Heart right ventricle (tissue), 16 donors: ENCODE measurements at regions of chr5 and their contacts with region 1.

Region 1: DNA sequence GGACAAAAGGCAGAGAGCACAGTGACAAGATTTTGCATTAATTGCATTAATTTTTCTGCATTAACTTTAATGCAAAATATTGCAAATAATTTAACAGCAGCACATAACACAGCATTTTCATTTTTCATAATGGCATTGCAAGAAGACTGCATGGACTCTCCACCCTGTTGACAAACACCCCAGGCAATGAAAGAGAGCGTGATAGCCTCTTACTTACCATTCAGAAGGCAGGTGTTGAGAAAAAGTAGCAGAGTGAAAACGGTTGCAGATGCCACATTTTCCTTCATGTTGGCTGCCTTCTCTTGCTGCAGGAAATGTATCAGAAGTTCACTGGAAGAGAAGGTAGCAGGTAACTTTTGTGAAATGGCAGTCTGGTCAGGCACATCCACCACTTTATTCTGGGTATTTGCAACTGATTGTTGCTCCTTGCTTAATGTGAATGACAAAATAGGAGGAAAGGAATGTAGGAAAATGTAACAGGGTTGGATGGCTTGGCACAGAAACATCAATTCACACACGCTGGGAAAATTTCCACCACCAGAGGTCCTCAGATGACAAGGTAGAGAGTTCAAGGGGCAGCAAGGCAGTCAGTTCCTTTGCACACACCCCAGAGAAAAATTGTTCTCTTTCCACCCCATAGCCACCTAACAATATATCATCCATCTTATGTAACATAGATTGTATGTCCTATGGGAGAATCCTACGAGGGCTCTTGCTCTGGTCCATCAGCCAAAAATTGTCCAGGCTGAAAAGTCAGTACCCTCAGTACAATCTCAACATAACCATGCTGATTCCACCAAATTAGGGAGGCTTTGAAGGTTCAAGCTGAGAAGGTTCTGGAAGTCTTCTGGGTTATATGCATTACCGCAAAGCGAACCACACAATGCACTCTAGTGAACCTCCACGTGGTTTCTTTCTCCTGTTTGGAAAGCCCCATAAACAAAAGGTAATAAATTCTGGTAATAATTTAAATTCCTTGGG is 41.9 kb upstream of the AGXT2 start:
- DNase-seq: peak in 1 of 2 donors; percentile 23
- ATAC-seq: no peak
- H3K4me3 ChIP-seq: no peak overlapping the region
- H3K27ac ChIP-seq: no peak overlapping the region
- H3K4me1 ChIP-seq: no peaks in the 10 kb centered on the region
- H3K27me3 ChIP-seq: no peaks in the 10 kb centered on the region
- CTCF ChIP-seq: peak; percentile 30 to 72 (median 63)

Region 2: DNA sequence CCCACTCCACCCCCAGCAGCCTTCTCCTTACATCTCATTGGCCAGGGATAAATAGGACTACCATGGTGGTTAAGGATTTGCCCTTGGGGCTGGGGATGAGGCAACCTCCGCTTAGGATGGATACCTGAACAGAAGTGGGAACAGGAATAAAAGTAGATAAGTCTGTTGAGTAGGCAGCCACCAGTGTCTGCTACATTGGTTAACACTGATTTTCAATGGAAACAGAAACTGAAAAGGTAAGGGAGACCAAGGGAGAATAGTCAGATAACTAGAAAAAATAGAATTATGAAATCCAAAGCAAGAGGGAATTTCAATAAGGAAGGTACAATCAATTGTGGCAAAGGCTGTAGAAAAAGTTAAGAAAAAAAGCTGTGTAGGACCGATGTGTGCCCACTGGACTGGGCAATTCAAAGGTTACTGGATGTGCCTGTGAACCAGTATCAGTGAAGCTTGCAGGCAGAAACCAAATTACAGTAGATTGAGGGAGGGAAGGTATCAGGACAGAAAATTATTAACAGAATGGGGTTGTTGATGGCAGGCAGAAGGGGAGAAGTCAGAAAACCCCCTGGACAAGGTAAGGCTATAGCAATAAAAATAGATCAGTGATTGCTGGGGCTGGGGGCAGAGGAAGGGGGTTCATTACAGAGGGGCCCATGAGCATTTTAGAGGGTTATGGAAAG is 111.5 kb before region 1 on chr5:
- intact Hi-C with region 1: no loop called
- DNase-seq: no peak
- ATAC-seq: no peak
- H3K4me3 ChIP-seq: no peak overlapping the region
- H3K27ac ChIP-seq: no peak overlapping the region
- H3K4me1 ChIP-seq: no peaks in the 10 kb centered on the region
- H3K27me3 ChIP-seq: peaks cover 0 to 5% (median 0%) of the 10 kb centered on the region in 7 donors
- CTCF ChIP-seq: no peak

Region 3: GRCh38 chr5:35202319-35203111 is 112.9 kb after region 1 on chr5:
- intact Hi-C with region 1: loop called in 1 of 10 experiments (anchors 5 kb)
- DNase-seq: peak in 1 of 2 donors; percentile 26
- ATAC-seq: peak in 3 of 8 donors; percentile 35 to 60 (median 46)
- H3K4me3 ChIP-seq: no peak overlapping the region
- H3K27ac ChIP-seq: no peak overlapping the region
- H3K4me1 ChIP-seq: peaks cover 0 to 16% (median 12%) of the 10 kb centered on the region in 9 donors
- H3K27me3 ChIP-seq: peaks cover 0 to 11% (median 0%) of the 10 kb centered on the region in 7 donors
- CTCF ChIP-seq: peak in 8 of 9 donors; percentile 13 to 57 (median 44)